BJ (cell line): ENCODE measurements at regions of chr6 and their contacts with region 1.

Region 1: GRCh38 chr6:55617272-55617671 is 38.3 kb upstream of the HMGCLL1 start:
- DNase-seq: no peak
- H3K4me3 ChIP-seq: no peak overlapping the region
- H3K27me3 ChIP-seq: no peaks in the 10 kb centered on the region
- CTCF ChIP-seq: peak; percentile 71

Region 2: DNA sequence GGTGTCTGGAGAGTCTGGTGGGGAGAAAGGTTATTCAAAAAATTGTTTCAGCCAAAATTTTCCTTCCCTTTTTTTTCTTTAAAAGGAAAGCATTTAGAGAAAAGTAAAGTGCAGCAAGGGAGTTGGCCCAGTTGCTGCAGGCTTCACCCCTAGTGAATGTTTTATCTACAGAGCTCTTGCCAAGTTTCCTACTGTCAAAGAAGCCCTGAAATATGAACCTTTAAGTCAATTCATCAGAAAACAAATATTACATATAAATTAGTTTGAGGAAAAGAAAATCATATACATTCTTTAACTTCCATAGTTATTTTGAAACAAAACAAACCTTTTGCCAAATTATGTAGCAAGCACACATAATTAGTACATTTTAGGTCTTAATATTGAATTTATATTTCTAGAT is 13.3 kb before region 1 on chr6:
- CTCF ChIA-PET with region 1: interaction called, 11 read pairs
- POLR2A ChIA-PET with region 1: no interaction called
- DNase-seq: no peak
- H3K4me3 ChIP-seq: no peak overlapping the region
- H3K27me3 ChIP-seq: no peaks in the 10 kb centered on the region
- CTCF ChIP-seq: no peak

Region 3: GRCh38 chr6:55777461-55777860 is 160.2 kb after region 1 on chr6:
- CTCF ChIA-PET with region 1: no interaction called
- POLR2A ChIA-PET with region 1: no interaction called
- DNase-seq: no peak
- H3K4me3 ChIP-seq: no peak overlapping the region
- H3K27me3 ChIP-seq: no peaks in the 10 kb centered on the region
- CTCF ChIP-seq: no peak

Region 4: DNA sequence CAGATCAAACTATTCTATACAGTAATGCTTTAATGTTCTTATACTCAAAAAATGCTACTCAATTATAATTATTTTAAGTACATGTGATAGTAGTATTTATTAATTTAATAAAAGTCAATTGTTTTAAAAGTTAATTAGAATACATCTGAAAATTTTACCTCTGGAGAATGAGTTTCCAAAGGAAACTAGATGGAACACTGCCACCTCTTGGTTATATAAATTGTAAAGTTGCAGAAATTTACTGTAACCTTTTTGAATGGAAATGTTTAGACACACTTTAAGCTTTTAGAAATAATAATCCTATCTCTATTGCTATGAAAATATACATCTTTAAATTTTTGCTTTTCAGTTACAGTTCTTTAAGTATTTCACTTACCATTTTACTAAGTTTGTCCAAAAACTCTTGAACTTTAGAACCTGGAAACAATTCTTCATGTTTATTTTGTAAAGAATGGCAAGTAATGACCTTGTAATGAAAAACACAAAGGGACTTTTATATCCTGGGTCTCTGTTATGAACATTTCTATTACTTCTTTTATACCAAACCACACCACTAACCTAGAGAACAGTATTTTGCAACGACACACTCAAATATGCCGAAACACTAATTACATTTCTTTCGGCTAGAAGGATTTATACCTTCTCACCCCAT is 269.0 kb after region 1 on chr6:
- CTCF ChIA-PET with region 1: interaction called, 22 read pairs
- POLR2A ChIA-PET with region 1: no interaction called
- DNase-seq: no peak
- H3K4me3 ChIP-seq: no peak overlapping the region
- H3K27me3 ChIP-seq: no peaks in the 10 kb centered on the region
- CTCF ChIP-seq: peak; percentile 33; the same call in 1 of the 2 replicates

Region 5: DNA sequence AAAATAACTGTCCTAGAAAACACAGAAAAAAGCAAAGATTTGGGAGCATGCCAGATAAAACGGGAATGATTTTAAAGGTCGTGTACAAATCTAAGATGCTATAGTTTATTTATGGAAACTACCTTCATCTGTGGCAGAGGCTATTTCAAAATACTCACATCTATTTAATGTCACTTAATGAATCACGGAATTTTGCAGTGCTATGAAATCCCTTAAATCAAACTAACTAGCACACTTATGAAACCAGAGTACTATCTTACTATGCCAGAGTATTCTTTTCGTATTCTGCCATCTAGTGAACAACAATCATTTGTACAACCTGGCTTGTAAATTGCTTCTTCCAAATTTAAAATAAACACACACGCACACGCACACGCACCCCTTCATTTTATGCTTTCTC is 336.1 kb after region 1 on chr6:
- CTCF ChIA-PET with region 1: interaction called, 44 read pairs
- POLR2A ChIA-PET with region 1: no interaction called
- DNase-seq: peak; percentile 30
- H3K4me3 ChIP-seq: no peak overlapping the region
- H3K27me3 ChIP-seq: no peaks in the 10 kb centered on the region; the same call in 1 of the 2 replicates
- CTCF ChIP-seq: peak; percentile 47; the same call in 1 of the 2 replicates